ENCODE measurements at regions of chr6 and their contacts with region 1.

Region 1: GRCh38 chr6:131923356-131923755 is 27.8 kb downstream of the CCN2 start:
- DNase-seq: peak in 1 of 2 experiments; percentile 78
- ATAC-seq: peak; percentile 59 to 80; a peak in 3 of 6 replicates
- H3K4me3 ChIP-seq: no peak overlapping the region
- H3K27ac ChIP-seq: no peak overlapping the region
- H3K4me1 ChIP-seq: 0 out of 3 replicates have a peak, but pooled peaks cover 3% of the 10 kb centered on the region
- CTCF ChIP-seq: peak; percentile 36
- EP300 ChIP-seq: no peak
- POLR2A ChIP-seq: no peak
- RAD21 ChIP-seq: peak; percentile 23 to 65; a peak in 2 of 5 replicates

Region 2: GRCh38 chr6:131317516-131317915 is 605.8 kb before region 1 on chr6:
- CTCF ChIA-PET with region 1: no interaction called
- POLR2A ChIA-PET with region 1: no interaction called
- DNase-seq: no peak
- ATAC-seq: no peak
- H3K4me3 ChIP-seq: no peak overlapping the region
- H3K27ac ChIP-seq: no peak overlapping the region
- H3K4me1 ChIP-seq: no peaks in the 10 kb centered on the region
- CTCF ChIP-seq: no peak
- EP300 ChIP-seq: no peak
- POLR2A ChIP-seq: no peak
- RAD21 ChIP-seq: no peak

Region 3: DNA sequence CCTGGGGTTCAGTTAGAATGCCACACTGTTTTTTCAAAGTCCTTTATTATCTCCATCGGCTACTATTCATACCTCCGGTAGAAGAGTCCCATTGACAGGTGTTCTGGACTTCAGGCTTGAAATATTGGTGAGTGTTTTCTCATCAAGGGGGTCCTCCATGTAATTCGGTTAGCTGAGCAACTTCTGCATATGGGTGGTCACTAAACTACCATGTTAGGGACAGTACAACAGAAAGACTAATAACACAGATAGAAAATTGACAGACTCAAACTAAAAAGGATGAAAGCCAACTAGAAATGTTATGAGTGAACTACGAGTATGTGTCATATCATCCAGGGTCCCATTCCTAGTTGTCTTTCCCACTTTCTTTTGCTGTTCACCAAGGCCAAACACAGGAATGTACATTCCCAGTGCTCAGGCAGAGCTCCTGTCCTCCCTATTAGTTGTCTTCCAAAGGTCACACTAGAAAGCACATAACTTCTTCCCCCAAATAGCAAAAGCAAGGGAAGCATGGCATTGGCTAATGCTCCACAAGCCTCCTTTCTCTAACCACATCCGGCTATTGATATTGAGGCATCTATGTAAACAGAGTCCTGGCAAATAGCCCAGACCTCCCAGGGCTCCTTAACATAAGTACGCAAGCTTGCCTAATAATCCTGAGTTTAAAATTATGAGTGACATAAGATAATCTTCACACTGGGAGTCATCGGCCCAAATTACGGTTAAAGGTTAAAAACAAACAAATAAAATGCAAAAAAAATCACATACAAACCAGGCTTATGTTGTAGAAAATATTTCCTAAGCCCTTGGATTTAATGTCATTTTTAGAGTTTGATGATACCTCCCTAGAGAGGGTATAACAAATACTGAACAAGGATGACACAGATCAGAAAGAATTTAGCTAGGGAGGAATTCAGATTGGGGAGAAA is 14.6 kb after region 1 on chr6:
- CTCF ChIA-PET with region 1: interaction called, 16 read pairs
- POLR2A ChIA-PET with region 1: no interaction called
- DNase-seq: peak in 1 of 2 experiments; percentile 86
- ATAC-seq: peak; percentile 81 to 94
- H3K4me3 ChIP-seq: no peak overlapping the region
- H3K27ac ChIP-seq: peak overlapping the region; percentile 27 to 52; a peak in 5 of 6 replicates
- H3K4me1 ChIP-seq: peaks cover 25% of the 10 kb centered on the region
- CTCF ChIP-seq: no peak
- EP300 ChIP-seq: peak; percentile 18 to 56; a peak in 1 of 5 replicates
- POLR2A ChIP-seq: no peak
- RAD21 ChIP-seq: no peak

Region 4: DNA sequence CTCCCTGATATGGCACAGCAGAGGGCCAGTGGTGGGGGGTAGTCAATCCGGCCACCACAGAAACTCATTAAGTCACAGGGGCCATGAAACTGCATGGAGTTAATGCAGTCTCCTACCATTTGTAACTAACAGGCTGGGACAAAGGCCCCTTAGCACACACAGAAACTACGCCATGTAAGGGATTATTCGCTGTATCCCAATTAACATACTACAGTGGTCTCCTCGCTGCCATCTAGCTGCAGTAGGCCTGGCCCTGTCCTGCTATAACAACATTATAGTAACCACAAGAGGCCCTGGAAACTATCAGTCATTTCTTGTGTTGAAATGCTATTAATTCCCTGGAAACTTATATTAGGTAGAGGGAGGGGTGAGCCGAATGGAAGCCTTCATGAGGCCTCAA is 100.1 kb after region 1 on chr6:
- CTCF ChIA-PET with region 1: no interaction called
- POLR2A ChIA-PET with region 1: no interaction called
- DNase-seq: no peak
- ATAC-seq: no peak
- H3K4me3 ChIP-seq: no peak overlapping the region
- H3K27ac ChIP-seq: no peak overlapping the region
- H3K4me1 ChIP-seq: peaks cover 16% of the 10 kb centered on the region
- CTCF ChIP-seq: no peak
- EP300 ChIP-seq: no peak
- POLR2A ChIP-seq: no peak
- RAD21 ChIP-seq: no peak

Region 5: GRCh38 chr6:132045877-132046276 is 122.5 kb after region 1 on chr6:
- CTCF ChIA-PET with region 1: no interaction called
- POLR2A ChIA-PET with region 1: no interaction called
- DNase-seq: no peak
- ATAC-seq: no peak
- H3K4me3 ChIP-seq: no peak overlapping the region
- H3K27ac ChIP-seq: no peak overlapping the region
- H3K4me1 ChIP-seq: no peaks in the 10 kb centered on the region
- CTCF ChIP-seq: no peak
- EP300 ChIP-seq: no peak
- POLR2A ChIP-seq: no peak
- RAD21 ChIP-seq: no peak

Region 6: GRCh38 chr6:132161283-132161682 is 237.9 kb after region 1 on chr6:
- CTCF ChIA-PET with region 1: interaction called, 18 read pairs
- POLR2A ChIA-PET with region 1: no interaction called
- DNase-seq: peak; percentile 1 to 38
- ATAC-seq: peak; percentile 62 to 82; a peak in 3 of 6 replicates
- H3K4me3 ChIP-seq: no peak overlapping the region
- H3K27ac ChIP-seq: no peak overlapping the region
- H3K4me1 ChIP-seq: no peaks in the 10 kb centered on the region
- CTCF ChIP-seq: peak; percentile 66
- EP300 ChIP-seq: no peak
- POLR2A ChIP-seq: no peak
- RAD21 ChIP-seq: peak; percentile 79 to 81

Region 7: DNA sequence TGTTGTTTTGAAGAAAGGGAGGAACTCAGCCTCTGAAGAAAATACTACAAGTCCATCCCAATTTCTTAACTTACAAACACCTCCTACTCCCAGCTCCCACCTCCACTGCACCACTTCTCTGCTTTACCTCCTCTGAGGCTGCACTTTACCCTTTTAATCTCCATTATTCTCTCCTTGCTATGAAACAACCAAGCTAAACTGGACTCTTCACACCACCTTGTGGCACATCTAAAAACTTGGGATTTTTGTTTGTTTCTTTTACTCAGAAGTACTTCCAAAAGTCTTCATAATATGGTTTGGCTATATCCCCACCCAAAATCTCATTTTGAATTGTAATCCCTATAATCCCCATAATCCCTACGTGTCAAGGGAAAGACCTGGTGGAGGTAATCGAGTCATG is 335.7 kb after region 1 on chr6:
- CTCF ChIA-PET with region 1: interaction called, 23 read pairs
- POLR2A ChIA-PET with region 1: no interaction called
- DNase-seq: peak; percentile 2 to 12
- ATAC-seq: no peak
- H3K4me3 ChIP-seq: no peak overlapping the region
- H3K27ac ChIP-seq: no peak overlapping the region
- H3K4me1 ChIP-seq: no peaks in the 10 kb centered on the region
- CTCF ChIP-seq: peak; percentile 27; the same call in 2 of the 3 replicates
- EP300 ChIP-seq: no peak
- POLR2A ChIP-seq: no peak
- RAD21 ChIP-seq: peak; percentile 32 to 46; a peak in 3 of 5 replicates

Region 8: DNA sequence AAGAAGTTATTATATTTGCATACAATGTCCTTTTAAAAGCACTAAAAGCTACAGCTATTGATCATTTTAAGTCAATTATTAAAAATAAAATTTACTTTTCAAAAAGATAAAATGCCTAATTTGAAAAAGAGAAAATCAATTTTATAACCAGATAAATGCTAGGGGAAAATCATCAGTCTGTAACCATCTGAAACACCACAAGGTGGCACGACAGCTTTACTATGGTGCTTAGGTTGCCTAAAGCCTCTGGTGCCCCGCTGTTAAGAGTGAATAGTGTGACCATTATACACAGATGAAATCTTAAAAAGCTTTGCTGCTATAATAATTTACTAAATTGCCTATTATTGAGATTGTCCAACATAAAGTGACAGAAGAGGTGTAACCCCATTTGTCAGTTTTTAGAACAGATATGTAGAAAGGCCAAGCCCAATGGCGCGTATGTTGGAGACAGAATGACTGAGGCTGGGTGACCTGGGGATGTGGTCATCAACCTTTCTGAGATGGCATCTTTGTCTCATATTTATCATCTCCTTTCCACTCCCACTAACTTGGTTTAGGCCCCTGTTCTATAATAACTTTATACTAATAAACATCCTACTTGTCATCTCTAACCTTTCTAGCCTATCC is 377.1 kb after region 1 on chr6:
- CTCF ChIA-PET with region 1: interaction called, 18 read pairs
- POLR2A ChIA-PET with region 1: interaction called, 3 read pairs
- DNase-seq: peak; percentile 16 to 53
- ATAC-seq: peak; percentile 87 to 88; a peak in 5 of 6 replicates
- H3K4me3 ChIP-seq: no peak overlapping the region
- H3K27ac ChIP-seq: no peak overlapping the region
- H3K4me1 ChIP-seq: no peaks in the 10 kb centered on the region
- CTCF ChIP-seq: peak; percentile 75
- EP300 ChIP-seq: no peak
- POLR2A ChIP-seq: no peak
- RAD21 ChIP-seq: peak; percentile 87 to 88

Measured in A549 (cell line).